Activated B cell treated with CpG ODN at 0.5 μM for 24 hours (primary cell): ENCODE measurements at regions of chr10 and their contacts with region 1.

Region 1: DNA sequence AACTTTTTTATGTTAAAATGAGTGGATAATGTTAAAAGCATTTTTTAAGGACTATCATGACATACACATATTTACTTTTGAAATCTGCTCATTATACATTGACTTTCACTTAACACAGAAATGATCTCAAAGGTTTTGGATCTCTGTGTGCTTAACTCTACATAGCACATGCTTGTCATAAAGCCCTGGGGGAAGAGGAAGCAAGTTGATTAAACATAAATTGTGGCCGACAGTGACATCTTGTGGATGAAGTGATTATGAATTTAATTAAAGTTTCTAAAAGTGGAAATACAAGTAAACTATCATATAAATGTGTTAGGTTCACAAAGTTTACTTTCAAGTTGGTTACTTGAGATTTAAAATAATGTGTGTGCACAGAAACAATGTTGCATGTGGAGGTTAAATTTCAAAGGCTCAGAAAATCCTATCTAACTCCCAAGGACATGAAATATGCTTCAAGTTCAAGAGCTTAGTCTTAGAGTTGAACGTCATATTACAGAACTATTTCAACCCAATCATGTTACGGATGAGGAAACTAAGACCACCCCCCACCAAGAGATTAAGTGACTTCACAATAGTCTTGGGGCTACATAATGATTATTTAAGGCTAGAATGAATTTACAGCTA is 1247.7 kb downstream of the GATA3 start:
- DNase-seq: no peak
- ATAC-seq: no peak
- H3K4me3 Mint-ChIP-seq: no peak overlapping the region
- H3K27ac Mint-ChIP-seq: no peak overlapping the region
- H3K4me1 Mint-ChIP-seq: no peaks in the 10 kb centered on the region
- H3K27me3 Mint-ChIP-seq: peaks cover 8% of the 10 kb centered on the region
- CTCF ChIP-seq: peak; percentile 33

Region 2: GRCh38 chr10:7424315-7424714 is 1877.9 kb before region 1 on chr10:
- CTCF ChIA-PET with region 1: no interaction called
- POLR2A ChIA-PET with region 1: no interaction called
- intact Hi-C with region 1: loop called (anchors 5 kb)
- DNase-seq: no peak
- ATAC-seq: peak; percentile 54
- H3K4me3 Mint-ChIP-seq: no peak overlapping the region
- H3K27ac Mint-ChIP-seq: no peak overlapping the region
- H3K4me1 Mint-ChIP-seq: peaks cover 4% of the 10 kb centered on the region
- H3K27me3 Mint-ChIP-seq: no peaks in the 10 kb centered on the region
- CTCF ChIP-seq: no peak

Region 3: DNA sequence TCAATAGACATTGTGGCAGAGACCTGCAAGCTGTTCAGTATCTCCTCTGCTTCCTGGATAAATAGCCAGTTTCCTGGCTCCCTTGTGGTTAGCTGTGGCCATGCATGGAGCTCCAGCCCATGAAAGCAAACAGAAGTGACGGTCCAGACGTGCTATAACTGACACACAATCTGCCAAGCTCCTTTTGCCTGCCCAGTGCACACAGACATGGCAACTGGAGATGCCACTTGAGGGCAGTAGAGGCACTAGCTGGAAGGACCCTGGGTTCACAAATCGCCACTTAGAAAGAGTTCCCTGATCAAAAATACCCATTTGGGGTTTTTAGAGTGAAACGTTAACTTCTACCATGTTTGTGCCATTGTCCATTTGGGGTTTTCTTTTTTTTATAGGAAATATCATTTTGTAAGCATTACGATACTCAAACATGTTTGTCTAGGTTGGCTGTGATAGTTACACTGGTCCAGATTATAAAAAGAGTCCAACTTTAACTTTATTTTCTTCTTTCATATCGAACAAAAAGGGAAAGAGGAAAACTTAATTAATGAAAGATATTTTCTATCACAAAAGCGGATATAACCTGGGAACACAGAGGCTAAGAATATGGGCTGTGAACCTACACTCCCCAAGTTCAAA is 1545.8 kb before region 1 on chr10:
- CTCF ChIA-PET with region 1: no interaction called
- POLR2A ChIA-PET with region 1: no interaction called
- intact Hi-C with region 1: loop called (anchors 2 kb)
- DNase-seq: no peak
- ATAC-seq: no peak
- H3K4me3 Mint-ChIP-seq: no peak overlapping the region
- H3K27ac Mint-ChIP-seq: no peak overlapping the region
- H3K4me1 Mint-ChIP-seq: no peaks in the 10 kb centered on the region
- H3K27me3 Mint-ChIP-seq: no peaks in the 10 kb centered on the region
- CTCF ChIP-seq: no peak

Region 4: DNA sequence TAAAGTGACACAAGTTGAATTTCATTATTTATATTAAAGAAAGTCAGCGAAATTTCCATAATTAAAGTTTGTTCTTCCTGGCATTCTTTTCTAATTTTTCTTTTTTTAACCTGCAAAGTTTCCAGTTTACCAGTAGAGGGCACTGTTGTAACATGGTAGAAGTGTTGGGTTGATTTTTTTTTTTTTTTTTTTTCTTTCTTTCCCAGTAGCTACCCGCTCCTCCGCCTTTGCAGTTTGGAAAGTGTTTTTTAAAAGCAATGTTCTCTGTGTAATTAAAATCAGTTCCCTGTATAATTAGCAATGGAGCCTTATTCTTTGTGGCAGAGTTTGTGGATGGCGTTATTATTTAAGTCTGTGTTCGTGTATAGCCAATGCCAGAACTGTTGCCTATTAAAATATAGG is 1430.2 kb before region 1 on chr10:
- CTCF ChIA-PET with region 1: no interaction called
- POLR2A ChIA-PET with region 1: no interaction called
- intact Hi-C with region 1: loop called (anchors 1 kb)
- DNase-seq: no peak
- ATAC-seq: no peak
- H3K4me3 Mint-ChIP-seq: peak overlapping the region; percentile 60
- H3K27ac Mint-ChIP-seq: no peak overlapping the region
- H3K4me1 Mint-ChIP-seq: peaks cover 10% of the 10 kb centered on the region
- H3K27me3 Mint-ChIP-seq: no peaks in the 10 kb centered on the region
- CTCF ChIP-seq: peak; percentile 85